ENCODE measurements at regions of chr16 and their contacts with region 1.

Region 1: GRCh38 chr16:180938-181667 is 844 bp downstream of the HBQ1 start:
- DNase-seq: peak; percentile 88
- ATAC-seq: peak; percentile 71 to 78
- H3K4me3 ChIP-seq: peak overlapping the region; percentile 48
- H3K27ac ChIP-seq: peak overlapping the region; percentile 56 to 82; a peak in 5 of 6 replicates
- H3K4me1 ChIP-seq: peaks cover 9% of the 10 kb centered on the region; the same call in 1 of the 3 replicates
- CTCF ChIP-seq: peak; percentile 90
- EP300 ChIP-seq: no peak
- POLR2A ChIP-seq: no peak
- RAD21 ChIP-seq: peak; percentile 60 to 83

Region 2: DNA sequence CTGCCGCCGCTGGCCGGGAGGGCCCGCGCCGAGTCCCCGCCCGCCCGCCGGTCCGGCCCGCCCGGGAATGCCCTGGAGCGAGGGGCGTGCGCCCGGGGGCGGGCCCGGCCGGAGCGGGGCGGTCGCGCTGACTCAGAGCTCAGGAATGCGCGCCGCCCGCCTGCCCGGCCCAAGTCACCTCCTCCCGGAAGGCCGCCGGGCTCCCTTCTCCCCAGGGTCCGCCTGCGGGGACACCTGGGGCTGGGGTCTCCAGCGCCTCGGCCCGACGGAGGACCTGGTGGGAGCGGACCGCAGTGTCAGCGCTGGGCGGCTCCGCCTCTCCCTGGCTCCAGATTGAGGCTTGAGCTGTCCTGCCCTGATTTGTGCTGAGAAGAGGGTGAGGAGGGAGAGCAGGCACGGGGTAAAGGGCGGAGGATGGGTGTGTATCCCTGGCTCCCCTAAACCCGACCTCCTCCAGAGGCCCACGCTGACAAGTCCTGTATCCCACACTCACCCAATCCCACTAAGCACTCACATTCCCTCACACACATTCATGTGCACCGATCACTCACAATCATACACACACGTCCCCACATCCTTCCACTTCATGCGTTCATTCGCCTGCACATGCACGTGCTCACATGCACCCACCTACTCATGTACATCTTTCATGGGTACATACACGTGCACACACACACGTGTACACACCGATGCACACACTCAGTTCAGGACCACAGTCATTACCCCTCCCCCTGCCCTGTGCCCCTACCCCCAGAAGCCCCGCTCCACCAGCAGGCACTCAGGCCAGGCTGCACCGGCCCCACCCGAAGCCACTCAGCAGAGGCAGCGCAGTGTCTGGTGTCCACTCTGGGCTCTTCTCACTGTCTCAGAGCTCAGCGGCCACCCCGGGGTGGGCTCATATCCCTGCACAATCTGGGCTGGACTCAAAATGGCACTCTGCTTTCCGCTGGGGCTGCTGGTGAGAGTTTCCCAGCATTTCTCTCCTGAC is 108.2 kb before region 1 on chr16 and contains the start of gene RHBDF1:
- CTCF ChIA-PET with region 1: interaction called, 72 read pairs
- POLR2A ChIA-PET with region 1: no interaction called
- DNase-seq: peak; percentile 47 to 53
- ATAC-seq: peak; percentile 34 to 49
- H3K4me3 ChIP-seq: peak within 1 kb of the TSS; percentile 86
- H3K27ac ChIP-seq: peak within 1 kb of the TSS; percentile 79 to 92
- H3K4me1 ChIP-seq: peaks cover 35% of the 10 kb centered on the region
- CTCF ChIP-seq: no peak
- EP300 ChIP-seq: no peak
- POLR2A ChIP-seq: 0 out of 2 replicates have a peak, but pooled peaks have one; percentile 12
- RAD21 ChIP-seq: no peak
- polyA plus RNA-seq, gene RHBDF1: 13.5 and 17.9 TPM in 2 replicates

Region 3: GRCh38 chr16:129075-129474 is 52.0 kb before region 1 on chr16:
- CTCF ChIA-PET with region 1: interaction called, 15 read pairs
- POLR2A ChIA-PET with region 1: interaction called, 7 read pairs
- DNase-seq: no peak
- ATAC-seq: no peak
- H3K4me3 ChIP-seq: no peak overlapping the region
- H3K27ac ChIP-seq: no peak overlapping the region
- H3K4me1 ChIP-seq: no peaks in the 10 kb centered on the region
- CTCF ChIP-seq: no peak
- EP300 ChIP-seq: no peak
- POLR2A ChIP-seq: no peak
- RAD21 ChIP-seq: no peak

Region 4: GRCh38 chr16:200388-200787 is 19.3 kb after region 1 on chr16:
- CTCF ChIA-PET with region 1: interaction called, 12 read pairs
- POLR2A ChIA-PET with region 1: interaction called, 8 read pairs
- DNase-seq: no peak
- ATAC-seq: peak; percentile 67 to 73; a peak in 4 of 6 replicates
- H3K4me3 ChIP-seq: no peak overlapping the region
- H3K27ac ChIP-seq: 0 out of 6 replicates have a peak overlapping the region, but pooled peaks of 1 of the 2 experiments have one; percentile 4
- H3K4me1 ChIP-seq: peaks cover 5% of the 10 kb centered on the region; the same call in 1 of the 3 replicates
- CTCF ChIP-seq: no peak
- EP300 ChIP-seq: no peak
- POLR2A ChIP-seq: no peak
- RAD21 ChIP-seq: no peak

Measured in A549 (cell line).